Dorsolateral prefrontal cortex (tissue), 120 donors: ENCODE measurements at regions of chr11 and their contacts with region 1.

Region 1: GRCh38 chr11:118503216-118503615 is 24.1 kb upstream of the TTC36 start:
- DNase-seq: no peak
- H3K4me3 ChIP-seq: no peak overlapping the region
- H3K27ac ChIP-seq: peak overlapping the region in 5 of 59 donors; percentile 10 to 46 (median 34)
- H3K27me3 ChIP-seq: no peaks in the 10 kb centered on the region
- CTCF ChIP-seq: no peak

Region 2: GRCh38 chr11:117979481-117980211 is 523.6 kb before region 1 on chr11:
- intact Hi-C with region 1: no loop called
- DNase-seq: peak in 1 of 10 donors; percentile 22
- H3K4me3 ChIP-seq: no peak overlapping the region
- H3K27ac ChIP-seq: peak overlapping the region in 8 of 59 donors; percentile 4 to 67 (median 38)
- H3K27me3 ChIP-seq: peaks cover 0 to 5% (median 0%) of the 10 kb centered on the region in 45 donors
- CTCF ChIP-seq: no peak

Region 3: GRCh38 chr11:118415739-118416284 is 87.4 kb before region 1 on chr11:
- intact Hi-C with region 1: loop called in 1 of 2 experiments (anchors 10 kb)
- DNase-seq: peak in 1 of 10 donors; percentile 9
- H3K4me3 ChIP-seq: no peak overlapping the region
- H3K27ac ChIP-seq: peak overlapping the region in 21 of 59 donors; percentile 0 to 51 (median 28)
- H3K27me3 ChIP-seq: no peaks in the 10 kb centered on the region
- CTCF ChIP-seq: no peak

Region 4: GRCh38 chr11:118581057-118581456 is 77.8 kb after region 1 on chr11:
- intact Hi-C with region 1: no loop called
- DNase-seq: no peak
- H3K4me3 ChIP-seq: no peak overlapping the region
- H3K27ac ChIP-seq: peak overlapping the region in 13 of 59 donors; percentile 0 to 44 (median 12)
- H3K27me3 ChIP-seq: no peaks in the 10 kb centered on the region
- CTCF ChIP-seq: no peak